ENCODE measurements at regions of chr5 and their contacts with region 1.

Region 1: GRCh38 chr5:154654486-154655371 is 100.4 kb upstream of the LARP1 start:
- DNase-seq: no peak
- ATAC-seq: no peak
- H3K4me3 ChIP-seq: no peak overlapping the region
- H3K27ac ChIP-seq: no peak overlapping the region; the same call in 1 of the 2 replicates
- H3K4me1 ChIP-seq: peaks cover 10% of the 10 kb centered on the region
- H3K27me3 ChIP-seq: no peaks in the 10 kb centered on the region; a peak in 2 of 4 replicates
- CTCF ChIP-seq: no peak
- EP300 ChIP-seq: no peak
- POLR2A ChIP-seq: no peak
- RAD21 ChIP-seq: no peak

Region 2: GRCh38 chr5:154595662-154596061 is 59.1 kb before region 1 on chr5:
- CTCF ChIA-PET with region 1: no interaction called
- POLR2A ChIA-PET with region 1: no interaction called
- RAD21 ChIA-PET with region 1: no interaction called
- SMC1A ChIA-PET with region 1: no interaction called
- in situ Hi-C with region 1: no loop called
- intact Hi-C with region 1: no loop called
- DNase-seq: no peak
- ATAC-seq: no peak
- H3K4me3 ChIP-seq: no peak overlapping the region
- H3K27ac ChIP-seq: no peak overlapping the region
- H3K4me1 ChIP-seq: no peaks in the 10 kb centered on the region
- H3K27me3 ChIP-seq: no peaks in the 10 kb centered on the region; a peak in 1 of 4 replicates
- CTCF ChIP-seq: no peak
- EP300 ChIP-seq: no peak
- POLR2A ChIP-seq: no peak
- RAD21 ChIP-seq: no peak

Region 3: GRCh38 chr5:154618696-154619095 is 36.0 kb before region 1 on chr5:
- CTCF ChIA-PET with region 1: no interaction called
- POLR2A ChIA-PET with region 1: no interaction called
- RAD21 ChIA-PET with region 1: no interaction called
- SMC1A ChIA-PET with region 1: no interaction called
- in situ Hi-C with region 1: no loop called
- intact Hi-C with region 1: no loop called
- DNase-seq: no peak
- ATAC-seq: no peak
- H3K4me3 ChIP-seq: no peak overlapping the region
- H3K27ac ChIP-seq: no peak overlapping the region
- H3K4me1 ChIP-seq: no peaks in the 10 kb centered on the region
- H3K27me3 ChIP-seq: no peaks in the 10 kb centered on the region; a peak in 1 of 4 replicates
- CTCF ChIP-seq: no peak
- EP300 ChIP-seq: no peak
- POLR2A ChIP-seq: no peak
- RAD21 ChIP-seq: no peak

Region 4: DNA sequence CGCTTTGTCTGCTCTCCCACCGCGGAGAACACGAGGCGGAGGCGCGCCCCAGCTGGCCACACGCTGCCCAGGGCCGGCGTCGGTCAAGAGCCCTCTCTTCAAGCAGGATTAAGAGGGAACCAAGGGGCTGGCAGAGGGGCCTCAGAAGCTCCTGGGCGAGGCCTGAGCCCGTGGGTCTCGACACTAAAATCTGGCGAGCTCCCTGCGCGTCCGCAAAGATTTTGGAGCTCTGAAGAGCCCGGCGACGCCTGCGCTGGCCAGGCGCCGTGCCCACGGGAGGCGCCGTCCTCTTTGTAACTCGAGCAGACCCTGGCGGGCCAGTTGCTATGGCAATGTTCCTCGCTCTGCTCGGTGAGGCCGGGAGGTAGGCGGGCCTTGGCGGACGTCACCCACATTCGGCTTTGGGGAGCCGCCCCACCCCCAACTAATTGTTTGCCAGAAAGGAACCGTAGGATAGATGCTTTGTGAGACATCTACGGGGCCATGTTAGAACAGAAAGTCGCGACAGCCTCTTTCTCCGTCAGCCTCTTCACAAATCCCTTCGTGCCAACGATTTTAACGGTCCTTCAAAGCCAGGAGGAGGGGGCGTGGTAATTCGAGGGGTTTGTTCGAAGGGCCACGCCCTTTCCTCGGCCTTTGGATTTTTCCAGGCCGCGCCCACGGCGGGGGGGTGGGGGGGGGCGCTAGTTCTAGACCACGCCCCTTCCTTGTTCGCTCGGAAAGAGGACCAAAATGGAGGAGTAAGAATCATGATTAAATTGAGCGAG is 203.0 kb after region 1 on chr5:
- CTCF ChIA-PET with region 1: interaction called, 4 read pairs
- POLR2A ChIA-PET with region 1: no interaction called
- RAD21 ChIA-PET with region 1: no interaction called
- SMC1A ChIA-PET with region 1: interaction called, 3 read pairs
- in situ Hi-C with region 1: no loop called
- intact Hi-C with region 1: loop called (anchors 5 kb)
- DNase-seq: peak; percentile 62
- ATAC-seq: peak; percentile 78
- H3K4me3 ChIP-seq: peak overlapping the region; percentile 80
- H3K27ac ChIP-seq: peak overlapping the region; percentile 91
- H3K4me1 ChIP-seq: peaks cover 11% of the 10 kb centered on the region
- H3K27me3 ChIP-seq: no peaks in the 10 kb centered on the region
- CTCF ChIP-seq: 0 out of 6 replicates have a peak, but pooled peaks of 1 of the 3 experiments have one; percentile 5
- EP300 ChIP-seq: peak in 1 of 2 experiments; percentile 8; a peak in 1 of 4 replicates
- POLR2A ChIP-seq: peak; percentile 67; the same call in 1 of the 2 replicates
- RAD21 ChIP-seq: no peak

Region 5: GRCh38 chr5:154916884-154917283 is 262.2 kb after region 1 on chr5:
- CTCF ChIA-PET with region 1: interaction called, 6 read pairs
- POLR2A ChIA-PET with region 1: no interaction called
- RAD21 ChIA-PET with region 1: no interaction called
- SMC1A ChIA-PET with region 1: no interaction called
- in situ Hi-C with region 1: no loop called
- intact Hi-C with region 1: loop called (anchors 10 kb)
- DNase-seq: no peak
- ATAC-seq: no peak
- H3K4me3 ChIP-seq: no peak overlapping the region
- H3K27ac ChIP-seq: no peak overlapping the region
- H3K4me1 ChIP-seq: no peaks in the 10 kb centered on the region
- H3K27me3 ChIP-seq: no peaks in the 10 kb centered on the region
- CTCF ChIP-seq: no peak
- EP300 ChIP-seq: no peak
- POLR2A ChIP-seq: no peak
- RAD21 ChIP-seq: no peak

Region 6: DNA sequence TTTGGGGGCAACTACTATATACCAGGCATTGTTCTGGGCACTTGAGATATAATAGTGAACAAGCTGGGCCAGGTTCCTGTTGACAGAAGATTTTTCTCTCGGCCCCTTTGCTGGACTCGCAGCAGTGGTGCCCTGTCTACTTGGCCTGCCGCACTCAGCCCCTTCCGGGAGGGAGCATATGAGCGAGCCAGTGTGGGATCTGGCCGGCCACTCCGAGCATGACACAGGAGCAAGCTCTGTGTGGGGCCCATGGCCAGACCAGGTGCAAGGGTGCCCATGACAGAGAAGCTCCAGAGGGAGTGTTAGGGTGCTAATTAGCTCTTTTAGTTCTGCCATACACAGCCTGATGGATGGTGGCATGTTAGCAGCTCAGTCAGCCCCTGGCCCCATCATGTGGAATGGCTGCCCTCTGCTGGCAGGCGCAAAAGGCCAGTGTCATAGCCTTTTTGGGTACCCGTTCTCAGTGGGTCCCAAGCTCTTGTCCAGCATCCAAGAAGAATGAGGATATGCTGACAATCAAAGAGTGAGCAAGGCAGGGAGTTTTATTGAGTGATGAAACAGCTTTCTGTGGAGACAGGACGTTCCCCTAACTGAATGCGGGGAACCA is 349.5 kb after region 1 on chr5:
- CTCF ChIA-PET with region 1: interaction called, 7 read pairs
- POLR2A ChIA-PET with region 1: no interaction called
- RAD21 ChIA-PET with region 1: interaction called, 5 read pairs
- SMC1A ChIA-PET with region 1: interaction called, 3 read pairs
- in situ Hi-C with region 1: no loop called
- intact Hi-C with region 1: loop called (anchors 5 kb)
- DNase-seq: no peak
- ATAC-seq: peak; percentile 78
- H3K4me3 ChIP-seq: no peak overlapping the region
- H3K27ac ChIP-seq: no peak overlapping the region
- H3K4me1 ChIP-seq: no peaks in the 10 kb centered on the region
- H3K27me3 ChIP-seq: no peaks in the 10 kb centered on the region
- CTCF ChIP-seq: peak; percentile 40 to 47 (median 44); a peak in 5 of 6 replicates
- EP300 ChIP-seq: no peak
- POLR2A ChIP-seq: no peak
- RAD21 ChIP-seq: peak; percentile 56; the same call in 1 of the 2 replicates

Region 7: DNA sequence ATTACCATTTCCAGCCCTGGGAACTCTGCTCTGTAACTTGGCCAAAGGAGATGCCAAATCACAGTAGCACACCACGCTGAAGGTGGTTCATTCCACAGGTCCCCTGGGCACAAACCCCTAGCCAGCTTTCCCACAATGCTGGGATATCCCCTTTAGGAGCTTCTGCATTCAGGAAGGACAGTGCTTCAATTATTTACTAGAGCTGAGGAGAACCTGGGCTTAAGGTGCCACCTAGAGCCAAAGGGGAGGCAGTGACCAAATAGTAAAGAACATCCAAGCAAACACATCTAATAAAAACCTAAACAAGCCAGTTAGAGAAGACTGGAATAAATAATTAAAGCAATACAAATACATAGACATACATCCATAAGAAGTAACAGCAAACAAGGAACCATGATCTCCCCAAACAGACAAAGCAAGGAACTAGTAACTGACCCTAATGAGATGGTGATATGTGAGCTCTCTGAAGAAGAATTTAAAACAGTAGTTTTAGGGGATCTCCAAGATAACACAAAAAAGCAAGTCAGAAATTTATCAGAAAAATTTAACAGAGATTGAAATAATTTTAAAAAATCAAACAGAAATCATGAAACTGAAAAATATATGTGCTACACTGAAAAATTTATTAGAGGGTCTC is 373.4 kb after region 1 on chr5:
- CTCF ChIA-PET with region 1: interaction called, 14 read pairs
- POLR2A ChIA-PET with region 1: no interaction called
- RAD21 ChIA-PET with region 1: interaction called, 3 read pairs
- SMC1A ChIA-PET with region 1: no interaction called
- in situ Hi-C with region 1: no loop called
- intact Hi-C with region 1: no loop called
- DNase-seq: no peak
- ATAC-seq: peak; percentile 76
- H3K4me3 ChIP-seq: no peak overlapping the region
- H3K27ac ChIP-seq: no peak overlapping the region
- H3K4me1 ChIP-seq: no peaks in the 10 kb centered on the region
- H3K27me3 ChIP-seq: no peaks in the 10 kb centered on the region
- CTCF ChIP-seq: peak; percentile 34 to 46 (median 38); a peak in 5 of 6 replicates
- EP300 ChIP-seq: no peak
- POLR2A ChIP-seq: no peak
- RAD21 ChIP-seq: peak; percentile 63

Region 8: GRCh38 chr5:155049569-155050383 is 395.0 kb after region 1 on chr5:
- CTCF ChIA-PET with region 1: interaction called, 12 read pairs
- POLR2A ChIA-PET with region 1: no interaction called
- RAD21 ChIA-PET with region 1: no interaction called
- SMC1A ChIA-PET with region 1: no interaction called
- in situ Hi-C with region 1: no loop called
- intact Hi-C with region 1: loop called (anchors 5 kb)
- DNase-seq: no peak
- ATAC-seq: peak; percentile 59; the same call in 2 of the 3 replicates
- H3K4me3 ChIP-seq: no peak overlapping the region
- H3K27ac ChIP-seq: no peak overlapping the region
- H3K4me1 ChIP-seq: no peaks in the 10 kb centered on the region
- H3K27me3 ChIP-seq: no peaks in the 10 kb centered on the region; a peak in 1 of 4 replicates
- CTCF ChIP-seq: peak; percentile 37 to 44 (median 41); a peak in 3 of 6 replicates
- EP300 ChIP-seq: no peak
- POLR2A ChIP-seq: no peak
- RAD21 ChIP-seq: no peak; the same call in 1 of the 2 replicates